ENCODE measurements at regions of chr20 and their contacts with region 1.

Region 1: GRCh38 chr20:35454881-35455609 is at the start of gene CEP250:
- DNase-seq: peak; percentile 100
- H3K4me3 ChIP-seq: peak within 1 kb of the TSS; percentile 50
- H3K4me3 Mint-ChIP-seq: peak within 1 kb of the TSS; percentile 93
- H3K27ac Mint-ChIP-seq: peak within 1 kb of the TSS; percentile 100
- H3K4me1 ChIP-seq: peaks cover 5% of the 10 kb centered on the region
- H3K4me1 Mint-ChIP-seq: peaks cover 29% of the 10 kb centered on the region
- H3K27me3 ChIP-seq: no peaks in the 10 kb centered on the region
- H3K27me3 Mint-ChIP-seq: no peaks in the 10 kb centered on the region
- CTCF ChIP-seq: no peak
- total RNA-seq, gene CEP250: 117 and 137 TPM in 2 replicates

Region 2: DNA sequence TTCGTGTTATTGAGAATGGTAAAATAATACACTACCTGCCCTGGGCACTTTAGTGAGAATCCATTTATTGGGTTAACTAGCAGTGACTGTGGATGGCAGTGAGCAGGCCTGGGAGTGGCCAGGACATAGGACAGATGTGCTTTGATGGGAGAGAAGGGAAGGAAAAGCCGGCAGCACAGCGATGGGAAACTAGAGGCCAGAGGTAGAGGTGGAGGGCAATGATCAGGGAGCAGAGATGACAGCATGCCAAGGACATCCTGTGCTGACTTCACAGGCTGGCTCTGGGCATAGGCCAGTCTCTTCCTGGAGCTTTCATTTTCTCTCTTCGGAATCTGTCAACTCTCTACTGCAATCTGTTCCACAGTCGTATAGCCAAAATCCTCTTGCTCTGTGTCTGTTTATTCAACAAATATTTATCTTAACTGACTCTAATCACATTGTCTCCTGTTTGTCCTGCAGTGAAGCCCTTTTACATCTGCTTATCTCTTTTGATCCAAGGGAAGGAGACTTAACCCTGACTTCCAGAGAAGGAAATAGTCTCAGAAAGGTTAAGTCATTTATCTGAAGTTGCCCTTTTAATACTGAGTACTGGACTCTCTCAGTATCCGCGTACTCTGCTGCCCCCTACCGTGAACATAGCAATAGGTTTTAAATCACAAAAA is 247.0 kb before region 1 on chr20:
- CTCF ChIA-PET with region 1: no interaction called
- POLR2A ChIA-PET with region 1: no interaction called
- intact Hi-C with region 1: no loop called
- DNase-seq: peak; percentile 93 to 96
- H3K4me3 ChIP-seq: no peak overlapping the region; the same call in 1 of the 2 replicates
- H3K4me3 Mint-ChIP-seq: no peak overlapping the region
- H3K27ac Mint-ChIP-seq: no peak overlapping the region
- H3K4me1 ChIP-seq: peaks cover 21% of the 10 kb centered on the region; the same call in 1 of the 2 replicates
- H3K4me1 Mint-ChIP-seq: peaks cover 5% of the 10 kb centered on the region
- H3K27me3 ChIP-seq: no peaks in the 10 kb centered on the region
- H3K27me3 Mint-ChIP-seq: no peaks in the 10 kb centered on the region
- CTCF ChIP-seq: peak; percentile 92 to 98

Region 3: DNA sequence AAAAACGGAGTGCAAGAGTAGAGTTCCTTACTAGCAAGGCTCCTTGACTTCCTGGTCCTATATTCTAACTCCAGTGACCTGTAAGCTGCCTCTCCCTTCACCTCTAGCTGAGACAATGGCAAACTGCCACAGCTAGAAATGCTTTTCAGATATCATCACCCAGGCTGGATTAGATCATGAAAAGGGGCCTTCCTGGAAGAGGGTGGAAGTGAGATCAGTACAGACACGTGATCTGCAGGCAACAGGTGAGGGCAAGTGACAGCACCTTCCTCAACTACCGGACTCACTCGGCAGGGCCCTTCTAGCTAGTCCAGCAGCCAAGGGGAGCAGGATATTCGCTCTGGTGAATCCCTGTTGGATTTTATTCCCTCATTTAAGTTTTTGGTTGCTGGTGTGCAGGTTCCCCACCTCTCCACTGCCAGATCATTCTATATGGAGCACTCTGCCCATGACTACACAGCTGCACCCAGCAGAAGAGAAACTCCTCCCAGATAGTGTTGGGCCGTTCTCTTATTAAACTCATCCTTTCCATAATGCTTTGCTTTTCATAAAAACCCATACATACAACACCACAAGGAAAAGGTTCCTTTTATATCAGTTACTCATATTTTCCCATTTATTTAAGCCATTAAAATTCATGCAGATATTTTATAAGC is 136.4 kb before region 1 on chr20:
- CTCF ChIA-PET with region 1: interaction called, 3 read pairs
- POLR2A ChIA-PET with region 1: interaction called, 18 read pairs
- intact Hi-C with region 1: no loop called
- DNase-seq: peak in 1 of 2 experiments; percentile 72
- H3K4me3 ChIP-seq: no peak overlapping the region
- H3K4me3 Mint-ChIP-seq: no peak overlapping the region
- H3K27ac Mint-ChIP-seq: peak overlapping the region; percentile 86
- H3K4me1 ChIP-seq: peaks cover 55% of the 10 kb centered on the region
- H3K4me1 Mint-ChIP-seq: peaks cover 48% of the 10 kb centered on the region
- H3K27me3 ChIP-seq: no peaks in the 10 kb centered on the region
- H3K27me3 Mint-ChIP-seq: no peaks in the 10 kb centered on the region
- CTCF ChIP-seq: no peak

Region 4: GRCh38 chr20:35359335-35359950 is 95.6 kb before region 1 on chr20:
- CTCF ChIA-PET with region 1: no interaction called
- POLR2A ChIA-PET with region 1: interaction called, 11 read pairs
- intact Hi-C with region 1: no loop called
- DNase-seq: no peak
- H3K4me3 ChIP-seq: no peak overlapping the region
- H3K4me3 Mint-ChIP-seq: no peak overlapping the region
- H3K27ac Mint-ChIP-seq: no peak overlapping the region
- H3K4me1 ChIP-seq: peaks cover 4% of the 10 kb centered on the region; the same call in 1 of the 2 replicates
- H3K4me1 Mint-ChIP-seq: no peaks in the 10 kb centered on the region
- H3K27me3 ChIP-seq: no peaks in the 10 kb centered on the region
- H3K27me3 Mint-ChIP-seq: no peaks in the 10 kb centered on the region
- CTCF ChIP-seq: no peak

Region 5: DNA sequence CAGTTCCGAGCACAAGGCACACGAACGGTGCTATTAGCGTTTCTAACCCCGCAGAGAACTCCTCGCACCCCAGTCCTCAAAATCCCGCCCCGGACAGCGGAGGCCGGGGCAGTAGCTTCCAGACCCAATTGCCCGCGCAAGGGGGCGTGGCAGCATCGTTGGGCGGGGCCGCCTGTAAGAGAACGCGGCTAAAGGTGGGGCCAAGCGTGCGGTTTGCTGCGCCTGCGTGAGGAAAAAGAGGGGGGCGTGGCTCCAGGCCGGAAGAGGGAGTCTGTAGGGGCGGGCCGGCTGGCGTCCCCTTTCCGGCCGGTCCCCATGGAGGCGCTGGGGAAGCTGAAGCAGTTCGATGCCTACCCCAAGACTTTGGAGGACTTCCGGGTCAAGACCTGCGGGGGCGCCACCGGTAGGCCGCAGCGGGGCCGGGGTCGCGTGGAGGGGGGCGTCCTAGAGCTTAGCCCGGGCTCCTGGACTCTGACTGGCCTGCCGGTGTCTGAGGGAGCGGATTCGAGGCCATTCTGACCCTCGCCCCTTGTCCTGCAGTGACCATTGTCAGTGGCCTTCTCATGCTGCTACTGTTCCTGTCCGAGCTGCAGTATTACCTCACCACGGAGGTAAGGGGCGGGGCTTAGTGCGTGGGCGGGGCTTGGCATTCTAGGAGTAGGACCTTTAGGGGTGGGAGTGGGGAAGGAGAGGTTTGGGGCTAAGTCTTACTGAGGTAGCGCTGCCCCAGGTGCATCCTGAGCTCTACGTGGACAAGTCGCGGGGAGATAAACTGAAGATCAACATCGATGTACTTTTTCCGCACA is 86.9 kb after region 1 on chr20 and contains the start of gene ERGIC3:
- CTCF ChIA-PET with region 1: interaction called, 11 read pairs
- POLR2A ChIA-PET with region 1: interaction called, 25 read pairs
- intact Hi-C with region 1: loop called (anchors 1 kb)
- DNase-seq: peak; percentile 100
- H3K4me3 ChIP-seq: peak within 1 kb of the TSS; percentile 85
- H3K4me3 Mint-ChIP-seq: peak within 1 kb of the TSS; percentile 82
- H3K27ac Mint-ChIP-seq: peak within 1 kb of the TSS; percentile 89
- H3K4me1 ChIP-seq: 0 out of 2 replicates have a peak, but pooled peaks cover 5% of the 10 kb centered on the region
- H3K4me1 Mint-ChIP-seq: peaks cover 7% of the 10 kb centered on the region
- H3K27me3 ChIP-seq: no peaks in the 10 kb centered on the region
- H3K27me3 Mint-ChIP-seq: no peaks in the 10 kb centered on the region
- CTCF ChIP-seq: no peak
- total RNA-seq, gene ERGIC3: 711 and 728 TPM in 2 replicates